Posterior vena cava (tissue), 2 donors: ENCODE measurements at regions of chr9 and their contacts with region 1.

Region 1: DNA sequence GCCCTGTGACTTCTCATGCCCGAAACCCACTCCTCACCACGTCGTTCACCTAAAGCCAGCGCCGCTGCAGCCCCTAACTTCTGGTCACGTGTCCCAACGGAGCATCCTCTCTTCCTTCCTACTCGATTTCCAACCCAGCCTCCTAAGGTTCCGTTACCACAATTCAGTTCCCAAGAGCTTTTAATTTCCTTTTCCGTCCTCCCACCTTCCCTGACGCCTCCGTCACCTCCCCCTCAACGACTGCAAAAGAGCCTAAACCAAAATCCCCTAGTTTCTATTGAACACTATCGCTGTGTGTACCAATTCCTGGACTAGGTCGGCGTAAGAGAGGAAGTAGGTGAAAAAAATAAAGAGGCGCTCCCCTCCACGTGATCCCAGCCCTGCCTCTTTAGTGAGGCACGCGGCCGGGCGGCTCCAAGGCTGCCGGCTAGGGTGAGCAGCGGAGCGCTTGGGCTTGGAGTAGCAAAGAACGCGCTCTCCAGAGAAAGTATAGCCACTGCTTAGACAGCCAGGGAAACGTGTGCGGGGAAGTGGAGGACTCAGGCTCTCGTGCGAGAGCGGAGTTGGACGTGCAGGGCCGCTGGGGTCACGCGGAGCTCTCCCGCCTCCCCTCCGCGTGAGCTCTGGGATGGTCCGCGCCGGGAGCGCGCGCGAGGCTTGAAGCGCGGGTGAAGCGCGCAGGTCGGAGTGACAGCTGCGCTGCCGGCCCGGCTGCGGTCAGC is at the starts of genes CENPP and NOL8:
- DNase-seq: peak; percentile 95
- total RNA-seq, gene CENPP: 3.5 to 4.5 TPM
- total RNA-seq, gene NOL8: 24.0 to 30.6 TPM

Region 2: DNA sequence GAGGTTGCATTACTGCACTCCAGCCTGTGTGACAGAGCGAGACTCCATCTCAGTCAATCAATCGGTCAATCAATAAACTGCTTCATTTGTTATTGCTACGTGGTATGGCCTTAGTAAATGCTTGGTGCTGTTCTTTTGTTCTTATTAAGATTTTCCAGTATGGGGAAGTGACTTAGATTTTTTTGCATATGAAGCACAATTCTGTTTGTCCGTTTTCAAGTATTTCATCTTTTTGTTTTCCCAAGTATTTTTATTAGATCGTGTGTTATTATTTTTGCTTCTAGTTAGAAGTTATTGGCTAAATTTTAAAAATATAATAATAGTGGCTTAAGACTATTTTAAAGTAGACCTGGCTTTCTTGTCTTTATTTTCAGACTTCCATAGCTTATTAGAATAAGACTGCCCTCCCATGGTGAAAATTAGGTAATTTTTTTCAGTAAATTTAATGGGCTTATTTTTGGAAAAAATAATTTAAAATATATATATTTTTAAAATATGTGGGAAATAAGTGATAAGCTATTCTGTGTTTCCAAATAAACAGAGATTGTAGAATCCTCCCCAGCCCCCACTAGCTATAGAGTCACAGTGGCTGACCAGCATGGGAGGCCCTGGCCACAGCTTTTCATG is 113.6 kb after region 1 on chr9:
- intact Hi-C with region 1: loop called in 1 of 2 experiments (anchors 10 kb)
- DNase-seq: no peak